BJ (cell line): ENCODE measurements at regions of chr3 and their contacts with region 1.

Region 1: DNA sequence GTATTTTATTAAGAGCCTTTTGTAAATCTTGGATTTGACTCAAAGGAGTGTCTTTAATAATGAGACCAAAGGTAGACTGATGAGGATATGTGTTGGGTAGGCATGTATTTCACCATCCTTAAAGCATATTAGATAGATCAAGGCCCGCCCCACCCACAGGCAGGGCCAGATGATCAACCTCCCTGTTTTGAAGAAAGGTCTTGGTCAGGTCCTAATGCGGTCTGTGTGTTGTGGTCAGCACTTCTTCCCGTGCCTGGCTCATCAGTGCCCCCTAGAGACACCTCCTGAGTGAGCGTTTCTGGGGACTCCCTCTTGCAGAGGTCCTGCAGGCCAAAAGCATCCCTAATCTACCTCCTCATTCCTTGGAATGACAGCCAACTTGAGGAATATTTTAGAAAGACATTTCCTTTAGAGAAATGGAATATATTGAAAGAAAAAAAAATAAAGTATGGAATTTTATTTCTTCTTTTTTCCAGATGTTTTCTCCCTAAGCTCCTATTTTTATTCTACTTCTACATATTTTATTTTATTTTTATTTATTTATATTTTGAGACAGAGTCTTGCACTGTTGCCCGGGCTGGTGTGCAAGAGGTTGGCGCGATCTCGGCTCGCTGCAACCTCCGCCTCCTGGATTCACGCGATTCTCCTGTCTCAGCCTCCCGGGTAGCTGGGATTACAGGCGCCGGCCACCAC is 6.0 kb downstream of the TM4SF4 start:
- DNase-seq: no peak
- H3K4me3 ChIP-seq: no peak overlapping the region
- H3K27me3 ChIP-seq: no peaks in the 10 kb centered on the region
- CTCF ChIP-seq: peak; percentile 92

Region 2: GRCh38 chr3:148955544-148956346 is 524.7 kb before region 1 on chr3:
- CTCF ChIA-PET with region 1: interaction called, 10 read pairs
- POLR2A ChIA-PET with region 1: no interaction called
- DNase-seq: peak; percentile 90
- H3K4me3 ChIP-seq: no peak overlapping the region
- H3K27me3 ChIP-seq: no peaks in the 10 kb centered on the region
- CTCF ChIP-seq: peak; percentile 70

Region 3: GRCh38 chr3:149377408-149378377 is 102.8 kb before region 1 on chr3 and contains the start of gene TM4SF1:
- CTCF ChIA-PET with region 1: interaction called, 10 read pairs
- POLR2A ChIA-PET with region 1: no interaction called
- DNase-seq: no peak
- H3K4me3 ChIP-seq: 0 out of 2 replicates have a peak within 1 kb of the TSS, but pooled peaks have one; percentile 3
- H3K27me3 ChIP-seq: no peaks in the 10 kb centered on the region
- CTCF ChIP-seq: no peak
- polyA plus RNA-seq, gene TM4SF1: 37.5 and 48.0 TPM in 2 replicates

Region 4: DNA sequence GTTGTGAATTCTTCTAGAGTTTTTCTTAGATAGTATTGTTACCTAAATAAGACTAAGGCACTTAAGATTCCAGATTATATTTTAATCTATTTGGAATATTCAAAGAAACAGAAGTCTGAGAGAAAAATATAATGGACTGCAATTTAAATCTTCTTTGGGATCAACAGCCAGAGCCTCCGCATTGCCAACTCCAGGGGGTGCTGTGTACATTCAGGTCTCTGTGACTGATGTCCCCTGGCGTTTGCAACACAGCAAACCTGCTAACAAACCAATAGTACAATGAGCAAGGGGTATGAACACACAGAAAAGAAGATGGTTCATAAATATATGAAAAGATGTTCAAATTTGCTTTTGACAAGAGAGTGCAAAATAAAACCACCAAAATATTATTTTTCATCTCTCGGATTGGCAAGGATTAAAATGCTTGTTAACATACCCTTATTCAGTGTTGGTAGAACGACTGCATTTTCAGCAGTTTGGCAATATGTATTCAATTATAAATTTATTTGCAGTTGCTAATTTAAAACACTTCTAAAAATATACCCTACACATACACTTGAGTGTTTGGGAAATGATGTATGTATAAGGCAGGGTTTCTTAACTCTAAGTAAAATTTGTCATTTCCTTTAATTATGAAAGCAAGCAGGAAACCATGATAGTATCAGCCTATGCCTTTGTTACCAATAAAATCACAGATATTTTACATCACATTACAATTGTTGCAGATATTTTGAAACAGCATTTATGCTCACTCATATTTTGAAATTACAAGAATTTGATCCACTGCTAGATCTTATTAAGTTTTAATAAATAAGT is 86.9 kb before region 1 on chr3:
- CTCF ChIA-PET with region 1: interaction called, 12 read pairs
- POLR2A ChIA-PET with region 1: no interaction called
- DNase-seq: no peak
- H3K4me3 ChIP-seq: no peak overlapping the region
- H3K27me3 ChIP-seq: no peaks in the 10 kb centered on the region
- CTCF ChIP-seq: peak; percentile 94

Region 5: DNA sequence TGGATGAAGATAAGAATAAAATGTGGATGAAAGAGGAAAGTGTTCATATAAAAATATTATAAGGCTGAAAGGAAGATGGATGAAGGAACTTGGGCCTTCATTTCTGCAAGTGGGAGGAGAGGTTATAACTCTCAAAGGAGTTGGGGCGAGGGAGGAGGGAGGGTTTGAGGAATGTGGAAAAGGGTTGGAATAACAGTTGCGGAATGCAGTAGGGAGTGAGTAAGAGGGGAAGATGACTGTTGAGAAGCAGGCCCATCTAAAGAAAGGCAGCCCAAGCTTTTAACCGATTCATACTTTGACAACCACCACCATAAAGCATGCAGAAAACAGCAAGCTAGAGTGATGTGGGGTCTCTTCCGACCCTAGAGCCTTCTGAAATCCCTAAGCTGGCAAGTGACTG is 14.3 kb before region 1 on chr3:
- CTCF ChIA-PET with region 1: interaction called, 12 read pairs
- POLR2A ChIA-PET with region 1: no interaction called
- DNase-seq: peak; percentile 67
- H3K4me3 ChIP-seq: no peak overlapping the region
- H3K27me3 ChIP-seq: no peaks in the 10 kb centered on the region
- CTCF ChIP-seq: no peak

Region 6: GRCh38 chr3:149678365-149678948 is 198.0 kb after region 1 on chr3:
- CTCF ChIA-PET with region 1: no interaction called
- POLR2A ChIA-PET with region 1: no interaction called
- DNase-seq: no peak
- H3K4me3 ChIP-seq: no peak overlapping the region
- H3K27me3 ChIP-seq: no peaks in the 10 kb centered on the region
- CTCF ChIP-seq: no peak